Vagina (tissue), 2 donors: ENCODE measurements at regions of chr22 and their contacts with region 1.

Region 1: DNA sequence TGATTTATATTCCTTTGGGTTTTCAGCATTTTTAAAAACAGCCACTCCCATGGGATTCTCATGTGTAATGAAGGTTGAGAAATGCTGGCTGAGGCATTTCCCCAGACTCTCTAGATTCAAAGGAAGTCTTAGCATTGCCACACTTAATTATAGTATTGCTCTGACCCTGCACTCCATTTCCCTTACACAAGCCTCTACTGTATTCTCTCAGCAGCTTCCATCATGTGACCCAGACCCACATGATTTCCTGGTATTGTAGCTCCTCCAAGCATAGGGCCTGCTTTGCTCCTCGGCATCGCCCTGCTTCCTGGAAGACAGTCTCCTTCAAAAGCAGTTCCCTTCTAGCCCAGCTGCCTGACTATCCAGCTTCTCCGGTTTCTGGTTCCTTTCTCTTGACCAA is 261.5 kb downstream of the LARGE1 start:
- DNase-seq: peak in 1 of 2 donors; percentile 92
- H3K4me3 ChIP-seq: no peak overlapping the region
- H3K27ac ChIP-seq: peak overlapping the region; percentile 53
- H3K4me1 ChIP-seq: peaks cover 30% of the 10 kb centered on the region
- H3K27me3 ChIP-seq: no peaks in the 10 kb centered on the region
- CTCF ChIP-seq: no peak
- POLR2A ChIP-seq: no peak

Region 2: DNA sequence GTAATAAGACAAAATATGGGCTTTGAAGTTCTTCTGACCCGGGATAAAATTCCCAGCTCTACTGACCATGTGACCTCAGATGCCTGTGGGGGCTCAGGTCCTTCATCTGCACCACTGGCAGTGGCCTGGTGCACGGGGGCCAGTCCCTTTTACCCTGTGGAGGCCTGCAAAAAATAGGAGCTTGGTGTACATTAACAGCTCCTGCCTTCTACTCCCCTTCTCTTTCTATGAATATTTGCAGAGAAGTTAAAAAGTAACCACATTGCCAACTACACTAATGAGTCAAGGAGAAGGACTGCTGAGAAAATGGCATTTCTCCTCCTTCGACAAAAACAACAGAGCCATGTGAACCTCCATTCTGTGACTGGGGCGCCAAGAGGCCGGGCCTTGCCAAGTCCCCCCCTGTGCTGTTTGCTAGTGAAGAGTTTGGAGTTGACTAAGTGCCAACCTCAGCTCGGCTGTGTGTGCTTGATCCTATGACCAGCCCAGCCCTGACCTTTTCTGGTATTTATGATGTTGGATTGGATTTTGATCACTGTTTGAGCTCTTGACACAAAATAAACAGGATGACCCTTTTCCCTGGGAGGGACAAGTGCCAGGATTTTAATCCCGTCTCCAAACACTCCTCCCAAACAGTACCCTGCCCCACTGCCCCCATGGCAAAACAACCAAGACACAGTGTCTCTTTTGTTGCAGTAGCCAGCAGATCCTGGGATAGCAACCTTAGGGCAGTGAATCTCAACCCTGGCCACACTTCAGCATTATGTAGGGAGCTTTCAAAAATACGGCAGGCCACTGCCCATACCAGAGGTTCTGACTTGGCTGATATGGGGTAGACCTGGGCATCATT is 118.6 kb before region 1 on chr22:
- intact Hi-C with region 1: loop called (anchors 10 kb)
- DNase-seq: no peak
- H3K4me3 ChIP-seq: no peak overlapping the region
- H3K27ac ChIP-seq: peak overlapping the region; percentile 53
- H3K4me1 ChIP-seq: peaks cover 63% of the 10 kb centered on the region
- H3K27me3 ChIP-seq: no peaks in the 10 kb centered on the region
- CTCF ChIP-seq: no peak
- POLR2A ChIP-seq: no peak

Region 3: GRCh38 chr22:33747576-33748180 is 88.9 kb after region 1 on chr22:
- intact Hi-C with region 1: no loop called
- DNase-seq: no peak
- H3K4me3 ChIP-seq: no peak overlapping the region
- H3K27ac ChIP-seq: no peak overlapping the region
- H3K4me1 ChIP-seq: no peaks in the 10 kb centered on the region
- H3K27me3 ChIP-seq: no peaks in the 10 kb centered on the region
- CTCF ChIP-seq: no peak
- POLR2A ChIP-seq: no peak